RWPE1 (cell line): ENCODE measurements at regions of chr11 and their contacts with region 1.

Region 1: DNA sequence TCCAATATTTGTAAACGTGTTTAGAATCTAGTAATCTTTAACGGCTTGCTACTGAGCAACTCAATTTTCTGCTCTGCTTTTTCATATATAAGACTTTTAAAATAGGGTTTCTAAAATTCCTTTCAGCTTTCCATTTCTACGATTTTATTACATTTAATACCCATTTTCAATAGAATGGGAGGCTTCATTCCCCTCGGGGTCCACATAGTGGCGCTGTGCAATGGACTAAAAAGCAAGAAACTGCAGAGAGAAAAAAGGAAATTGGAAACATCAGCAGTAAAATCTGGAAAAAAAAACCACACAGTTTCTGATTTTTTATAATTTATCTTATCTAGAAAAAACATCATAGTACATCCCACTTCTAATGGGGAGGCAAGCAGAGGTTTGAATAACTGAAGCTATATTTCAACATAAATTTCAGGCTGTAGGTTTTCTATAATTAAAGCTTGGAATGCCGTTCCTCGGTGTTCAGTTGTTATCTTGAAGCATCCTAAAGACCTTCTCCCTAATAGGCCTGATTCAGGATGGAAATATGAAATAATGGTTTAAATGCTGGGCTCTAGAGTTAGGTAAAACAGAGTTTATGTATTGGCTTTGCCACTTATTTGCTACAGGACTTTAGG is 18.7 kb upstream of the JHY start:
- DNase-seq: peak; percentile 63
- H3K27ac ChIP-seq: no peak overlapping the region
- CTCF ChIP-seq: peak; percentile 82

Region 2: DNA sequence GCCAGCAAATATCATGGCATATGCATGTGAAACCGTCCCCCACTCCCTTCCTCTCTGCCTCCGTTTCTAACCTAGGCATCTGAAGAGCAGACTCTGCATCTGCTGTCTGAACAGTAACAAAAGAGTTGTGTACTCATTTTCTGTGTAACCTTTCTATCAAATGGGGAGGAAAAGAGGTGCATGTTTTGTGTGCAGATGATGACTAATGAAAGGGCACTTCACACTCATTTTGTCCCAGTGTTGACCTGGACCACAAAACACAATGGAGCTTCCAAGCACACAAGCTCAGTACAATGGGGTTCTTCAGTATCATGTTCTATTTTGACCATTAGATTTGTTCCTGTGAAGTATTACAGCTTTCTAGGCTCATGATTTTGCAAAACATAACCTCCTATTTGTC is 31.7 kb after region 1 on chr11:
- CTCF ChIA-PET with region 1: no interaction called
- POLR2A ChIA-PET with region 1: no interaction called
- DNase-seq: no peak
- H3K27ac ChIP-seq: no peak overlapping the region
- CTCF ChIP-seq: no peak

Region 3: GRCh38 chr11:122917311-122917710 is 53.5 kb after region 1 on chr11:
- CTCF ChIA-PET with region 1: no interaction called
- POLR2A ChIA-PET with region 1: no interaction called
- DNase-seq: peak; percentile 40
- H3K27ac ChIP-seq: no peak overlapping the region
- CTCF ChIP-seq: no peak

Region 4: GRCh38 chr11:123020968-123021367 is 157.2 kb after region 1 on chr11:
- CTCF ChIA-PET with region 1: interaction called, 18 read pairs
- POLR2A ChIA-PET with region 1: no interaction called
- DNase-seq: peak; percentile 60
- H3K27ac ChIP-seq: no peak overlapping the region
- CTCF ChIP-seq: peak; percentile 46; the same call in 1 of the 2 replicates

Region 5: GRCh38 chr11:123054301-123055065 is 190.7 kb after region 1 on chr11:
- CTCF ChIA-PET with region 1: interaction called, 17 read pairs
- POLR2A ChIA-PET with region 1: interaction called, 5 read pairs
- DNase-seq: peak; percentile 73
- H3K27ac ChIP-seq: peak overlapping the region; percentile 62
- CTCF ChIP-seq: peak; percentile 73